OCI-LY7 (cell line): ENCODE measurements at regions of chr1 and their contacts with region 1.

Region 1: GRCh38 chr1:220219865-220220698 is 52.2 kb downstream of the RAB3GAP2 start:
- DNase-seq: no peak
- H3K4me3 ChIP-seq: no peak overlapping the region
- H3K27ac ChIP-seq: no peak overlapping the region
- H3K4me1 ChIP-seq: peaks cover 5% of the 10 kb centered on the region
- CTCF ChIP-seq: no peak

Region 2: DNA sequence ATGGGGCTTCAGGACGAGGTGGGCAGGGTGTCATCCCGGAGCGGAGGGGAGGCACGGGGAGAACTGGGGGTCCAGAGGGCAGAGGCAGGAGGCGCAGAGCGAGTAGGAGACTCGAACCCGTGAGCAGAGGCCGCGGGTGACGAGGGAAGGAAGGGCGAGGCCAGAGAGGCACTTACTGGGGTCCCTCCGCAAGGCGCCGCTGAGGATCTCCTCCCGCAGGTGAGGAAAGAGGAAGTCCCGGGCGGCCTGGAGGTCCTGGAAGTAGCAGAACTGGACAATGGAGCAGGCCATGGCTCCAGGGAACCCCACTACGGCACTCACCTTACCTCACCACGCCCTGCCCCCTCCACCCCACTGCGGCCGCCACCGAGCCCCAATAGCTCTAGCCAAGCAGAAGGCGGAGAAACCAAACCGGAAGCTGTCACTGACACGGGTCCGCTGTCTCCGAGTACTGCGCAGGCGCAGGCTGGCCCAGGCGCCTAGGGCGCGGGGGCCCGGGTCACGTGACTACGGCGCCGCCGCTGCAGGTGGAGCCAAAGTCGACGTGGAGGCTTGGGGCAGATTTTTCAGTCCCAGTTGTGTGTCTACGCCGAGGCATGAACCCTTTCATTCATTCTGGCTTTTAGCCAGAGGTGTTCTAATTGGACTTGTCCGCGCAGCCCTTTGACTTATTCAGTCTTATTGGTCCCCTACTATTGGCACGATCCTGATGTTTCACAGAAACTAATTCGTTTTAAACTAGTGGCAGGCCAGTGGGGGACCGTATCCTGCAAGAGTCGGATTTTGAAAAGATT is 52.2 kb after region 1 on chr1 and contains the start of gene RAB3GAP2:
- CTCF ChIA-PET with region 1: interaction called, 3 read pairs
- POLR2A ChIA-PET with region 1: interaction called, 6 read pairs
- intact Hi-C with region 1: loop called (anchors 2 kb)
- DNase-seq: peak; percentile 97
- H3K4me3 ChIP-seq: peak within 1 kb of the TSS; percentile 84
- H3K27ac ChIP-seq: peak within 1 kb of the TSS; percentile 37
- H3K4me1 ChIP-seq: peaks cover 25% of the 10 kb centered on the region
- CTCF ChIP-seq: no peak
- total RNA-seq, gene RAB3GAP2: 16.9 and 22.6 TPM in 2 replicates